ENCODE measurements at regions of chr12 and their contacts with region 1.

Region 1: GRCh38 chr12:31659087-31659933 is at the start of gene ETFBKMT:
- DNase-seq: peak; percentile 90 to 93
- ATAC-seq: peak; percentile 97
- H3K4me3 ChIP-seq: peak within 1 kb of the TSS; percentile 74 to 97
- H3K27ac ChIP-seq: peak within 1 kb of the TSS; percentile 84 to 100
- H3K4me1 ChIP-seq: peaks cover 0 to 2% of the 10 kb centered on the region in 2 donors
- H3K27me3 ChIP-seq: no peaks in the 10 kb centered on the region
- total RNA-seq, gene ETFBKMT: 2.8 to 4.9 TPM

Region 2: GRCh38 chr12:31682136-31682962 is 23.0 kb after region 1 on chr12:
- intact Hi-C with region 1: no loop called
- DNase-seq: peak in 1 of 2 donors; percentile 69
- ATAC-seq: peak; percentile 48
- H3K4me3 ChIP-seq: no peak overlapping the region
- H3K27ac ChIP-seq: no peak overlapping the region
- H3K4me1 ChIP-seq: no peaks in the 10 kb centered on the region
- H3K27me3 ChIP-seq: no peaks in the 10 kb centered on the region

Region 3: GRCh38 chr12:31728917-31729640 is 69.8 kb after region 1 on chr12 and contains the start of gene AMN1:
- intact Hi-C with region 1: loop called in 1 of 2 experiments (anchors 5 kb)
- DNase-seq: peak; percentile 99 to 100
- ATAC-seq: peak; percentile 98
- H3K4me3 ChIP-seq: peak within 1 kb of the TSS; percentile 79 to 88
- H3K27ac ChIP-seq: peak within 1 kb of the TSS; percentile 95 to 96
- H3K4me1 ChIP-seq: peaks cover 0 to 5% of the 10 kb centered on the region in 2 donors
- H3K27me3 ChIP-seq: no peaks in the 10 kb centered on the region
- total RNA-seq, gene AMN1: 11.7 to 12.4 TPM

Region 4: GRCh38 chr12:31959161-31959700 is 299.9 kb after region 1 on chr12 and contains the start of gene RESF1:
- intact Hi-C with region 1: loop called (anchors 2 to 5 kb)
- DNase-seq: peak; percentile 94
- ATAC-seq: peak; percentile 98
- H3K4me3 ChIP-seq: peak within 1 kb of the TSS; percentile 73 to 86
- H3K27ac ChIP-seq: peak within 1 kb of the TSS; percentile 82 to 84
- H3K4me1 ChIP-seq: peaks cover 0 to 4% of the 10 kb centered on the region in 2 donors
- H3K27me3 ChIP-seq: no peaks in the 10 kb centered on the region
- total RNA-seq, gene RESF1: 49.4 to 65.2 TPM

Region 5: DNA sequence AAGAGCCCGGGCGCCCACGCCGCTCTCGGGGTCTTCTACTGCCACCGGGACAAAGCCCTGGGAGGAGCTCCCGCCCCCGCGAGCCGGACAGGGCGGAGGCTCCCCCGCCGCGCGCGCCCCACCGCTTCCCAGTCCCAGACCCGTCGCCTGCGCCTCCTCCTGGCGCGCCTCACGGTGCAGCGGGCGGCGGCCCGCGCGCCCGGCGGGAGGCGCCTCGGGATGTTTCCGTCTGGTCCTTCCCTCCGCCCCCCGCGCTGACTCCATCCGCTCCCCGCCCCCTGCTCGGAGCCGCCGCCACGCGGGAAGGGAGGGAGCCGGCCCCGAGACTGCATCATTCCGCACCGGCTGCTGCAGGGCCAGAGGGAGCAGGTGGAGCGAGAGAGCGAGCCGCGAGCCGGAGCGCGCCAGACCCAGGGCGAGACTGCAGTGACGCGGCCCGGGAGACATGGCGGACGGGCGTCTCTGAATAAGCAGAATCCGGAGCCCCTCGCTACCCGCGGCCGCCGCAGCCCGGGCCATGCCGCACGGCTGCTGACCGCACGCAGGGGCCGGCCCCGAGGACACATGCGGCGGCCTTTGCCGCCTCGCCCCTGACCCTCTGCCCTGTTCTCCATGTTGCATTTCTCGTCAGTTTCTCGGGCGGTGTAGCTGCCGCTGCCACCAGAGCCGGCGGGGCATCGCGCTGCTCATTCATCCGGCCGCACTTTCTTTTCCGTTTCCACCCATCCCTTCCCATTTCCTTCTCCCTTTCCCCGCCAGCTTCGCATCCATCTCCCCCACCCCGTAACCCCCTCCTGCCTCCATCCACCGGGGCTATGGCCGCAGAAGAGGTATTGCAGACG is 447.4 kb after region 1 on chr12 and contains the start of gene BICD1:
- intact Hi-C with region 1: loop called in 1 of 2 experiments (anchors 5 kb)
- DNase-seq: peak; percentile 93 to 97
- ATAC-seq: peak; percentile 96
- H3K4me3 ChIP-seq: peak within 1 kb of the TSS; percentile 69 to 86
- H3K27ac ChIP-seq: peak within 1 kb of the TSS in 1 of 2 donors; percentile 80
- H3K4me1 ChIP-seq: peaks cover 0 to 1% of the 10 kb centered on the region in 2 donors
- H3K27me3 ChIP-seq: no peaks in the 10 kb centered on the region
- total RNA-seq, gene BICD1: 42.1 to 42.6 TPM

Region 6: GRCh38 chr12:32312049-32312670 is 652.9 kb after region 1 on chr12:
- intact Hi-C with region 1: loop called in 1 of 2 experiments (anchors 5 kb)
- DNase-seq: no peak
- ATAC-seq: no peak
- H3K4me3 ChIP-seq: no peak overlapping the region
- H3K27ac ChIP-seq: no peak overlapping the region
- H3K4me1 ChIP-seq: no peaks in the 10 kb centered on the region
- H3K27me3 ChIP-seq: no peaks in the 10 kb centered on the region

Region 7: GRCh38 chr12:32679091-32679919 is 1020.0 kb after region 1 on chr12 and contains the start of gene DNM1L:
- intact Hi-C with region 1: loop called in 1 of 2 experiments (anchors 2 kb)
- DNase-seq: peak; percentile 97
- ATAC-seq: peak; percentile 99
- H3K4me3 ChIP-seq: peak within 1 kb of the TSS; percentile 65 to 80
- H3K27ac ChIP-seq: peak within 1 kb of the TSS; percentile 62 to 88
- H3K4me1 ChIP-seq: no peaks in the 10 kb centered on the region
- H3K27me3 ChIP-seq: no peaks in the 10 kb centered on the region
- total RNA-seq, gene DNM1L: 68.8 to 92.5 TPM